ENCODE measurements at regions of chr10 and their contacts with region 1.

Region 1: DNA sequence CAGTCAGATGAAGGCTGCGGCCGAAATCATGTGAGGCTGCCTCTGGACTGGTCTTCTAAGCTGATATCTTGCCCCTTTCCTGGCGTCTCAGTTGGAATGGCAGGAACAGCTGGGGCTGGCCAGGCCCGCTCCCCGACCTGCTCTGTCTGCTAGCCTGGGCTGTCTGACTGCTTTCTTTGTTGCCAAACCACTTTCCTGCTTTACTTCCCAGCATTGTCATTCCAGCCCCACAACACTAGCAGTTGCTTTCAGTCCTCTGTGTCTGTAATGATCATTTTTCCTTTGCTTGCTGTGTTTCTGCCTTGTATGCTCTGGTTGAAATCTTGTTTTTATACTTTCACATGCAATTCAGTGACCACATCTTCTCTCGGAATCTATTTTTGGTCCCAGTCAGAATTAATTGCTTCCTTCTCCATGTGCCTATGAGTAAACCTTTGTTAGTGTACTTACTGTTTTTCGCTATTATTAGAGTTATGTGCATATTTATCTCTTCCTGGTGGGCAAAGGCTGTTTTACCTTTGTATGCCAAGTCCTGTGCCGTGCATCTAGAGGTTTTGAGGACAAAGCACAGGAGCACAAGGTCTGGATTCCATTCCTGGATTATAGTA is 21.6 kb downstream of the PRPF18 start:
- DNase-seq: no peak
- CTCF ChIP-seq: no peak

Region 2: DNA sequence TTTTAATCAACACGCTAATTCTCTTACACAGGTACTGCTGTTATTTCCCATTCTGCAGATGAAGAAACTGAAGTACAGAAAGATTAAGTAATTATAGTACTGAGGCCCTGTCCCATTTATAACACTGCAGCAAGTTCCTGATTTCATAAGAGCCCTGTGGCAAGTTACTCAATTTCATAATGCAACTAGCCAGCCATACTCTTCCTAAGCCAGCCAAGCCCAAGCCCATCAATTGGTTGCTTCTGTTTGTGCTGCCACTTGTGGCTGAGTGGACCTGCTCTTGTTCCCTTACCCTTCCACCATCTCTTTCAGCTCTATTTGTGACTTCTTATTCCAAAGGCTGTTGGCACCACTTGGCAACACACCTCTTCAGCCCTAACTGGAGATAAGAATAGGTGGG is 41.3 kb before region 1 on chr10:
- CTCF ChIA-PET with region 1: no interaction called
- POLR2A ChIA-PET with region 1: no interaction called
- DNase-seq: no peak
- CTCF ChIP-seq: no peak

Region 3: GRCh38 chr10:13621931-13622330 is 13.6 kb after region 1 on chr10:
- CTCF ChIA-PET with region 1: interaction called, 24 read pairs
- POLR2A ChIA-PET with region 1: interaction called, 3 read pairs
- DNase-seq: no peak
- CTCF ChIP-seq: no peak

Measured in GM10248 (cell line).